Naive thymus-derived CD4-positive, alpha-beta T cell (primary cell): ENCODE measurements at regions of chr20 and their contacts with region 1.

Region 1: GRCh38 chr20:53869466-53870258 is 200.7 kb downstream of the BCAS1 start:
- DNase-seq: peak in 8 of 9 donors; percentile 66 to 82 (median 76)
- ATAC-seq: peak; percentile 90
- H3K4me3 ChIP-seq: no peak overlapping the region
- H3K4me3 Mint-ChIP-seq: peak overlapping the region; percentile 11 to 85 (median 58)
- H3K27ac ChIP-seq: peak overlapping the region; percentile 60
- H3K27ac Mint-ChIP-seq: peak overlapping the region; percentile 79 to 97 (median 94)
- H3K4me1 ChIP-seq: peaks cover 64 to 73% of the 10 kb centered on the region in 2 donors
- H3K4me1 Mint-ChIP-seq: peaks cover 55 to 85% (median 73%) of the 10 kb centered on the region in 7 donors
- H3K27me3 ChIP-seq: no peaks in the 10 kb centered on the region
- H3K27me3 Mint-ChIP-seq: no peaks in the 10 kb centered on the region

Region 2: DNA sequence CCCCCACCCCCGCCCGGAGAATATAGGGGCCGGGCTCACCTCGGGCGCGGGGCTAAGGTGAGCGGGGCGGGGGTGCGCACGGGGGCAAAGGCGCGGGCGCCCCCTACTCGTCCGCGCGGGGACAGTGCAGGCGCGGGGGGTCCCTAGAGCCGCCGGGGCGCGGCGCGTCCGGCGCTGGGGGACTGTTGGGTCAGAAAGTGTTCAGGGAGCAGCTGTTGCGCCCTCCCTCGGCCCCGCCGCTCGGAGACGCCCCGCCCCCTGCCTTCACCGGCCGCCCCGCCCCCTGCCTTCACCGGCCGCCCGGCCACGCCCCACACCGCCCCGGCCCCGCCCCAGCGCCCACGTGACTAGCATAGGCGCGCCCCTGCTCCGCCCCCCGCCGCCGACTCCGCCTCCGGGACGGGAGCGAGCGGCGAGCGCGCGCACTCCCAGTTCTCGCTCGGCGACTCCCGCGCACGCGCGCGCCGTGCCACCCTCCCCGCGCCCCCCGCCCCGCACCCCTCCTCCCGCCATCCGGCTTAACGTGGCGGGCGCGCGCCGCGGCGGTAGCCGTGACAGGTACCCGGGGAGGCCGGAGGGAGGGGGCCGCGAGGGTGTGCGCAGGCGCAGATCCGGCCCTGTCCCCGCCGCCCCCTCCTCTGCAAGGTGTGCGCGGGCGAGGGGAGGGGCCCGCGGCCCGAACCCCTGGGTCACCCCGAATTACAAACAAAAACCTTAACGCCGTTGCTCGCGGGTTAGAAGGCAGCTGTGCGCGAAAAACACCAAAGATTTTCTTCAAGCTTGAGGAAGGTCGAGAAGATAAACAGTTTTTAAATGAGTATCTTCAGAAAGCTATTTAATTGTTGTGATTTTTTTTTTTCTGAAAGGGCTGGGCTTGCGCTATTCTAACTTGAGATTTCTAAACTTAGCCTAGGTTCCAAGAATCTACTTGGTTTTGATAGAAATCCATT is 275.3 kb before region 1 on chr20:
- CTCF ChIA-PET with region 1: interaction called, 3 read pairs
- POLR2A ChIA-PET with region 1: interaction called, 16 read pairs
- intact Hi-C with region 1: loop called in 1 of 2 experiments (anchors 1 kb)
- DNase-seq: peak; percentile 93 to 100 (median 96)
- ATAC-seq: peak; percentile 90
- H3K4me3 ChIP-seq: peak overlapping the region; percentile 81
- H3K4me3 Mint-ChIP-seq: peak overlapping the region; percentile 89 to 99 (median 92)
- H3K27ac ChIP-seq: peak overlapping the region; percentile 97
- H3K27ac Mint-ChIP-seq: peak overlapping the region; percentile 90 to 98 (median 97)
- H3K4me1 ChIP-seq: peaks cover 14 to 21% of the 10 kb centered on the region in 2 donors
- H3K4me1 Mint-ChIP-seq: peaks cover 23 to 66% (median 54%) of the 10 kb centered on the region in 7 donors
- H3K27me3 ChIP-seq: no peaks in the 10 kb centered on the region
- H3K27me3 Mint-ChIP-seq: no peaks in the 10 kb centered on the region

Region 3: DNA sequence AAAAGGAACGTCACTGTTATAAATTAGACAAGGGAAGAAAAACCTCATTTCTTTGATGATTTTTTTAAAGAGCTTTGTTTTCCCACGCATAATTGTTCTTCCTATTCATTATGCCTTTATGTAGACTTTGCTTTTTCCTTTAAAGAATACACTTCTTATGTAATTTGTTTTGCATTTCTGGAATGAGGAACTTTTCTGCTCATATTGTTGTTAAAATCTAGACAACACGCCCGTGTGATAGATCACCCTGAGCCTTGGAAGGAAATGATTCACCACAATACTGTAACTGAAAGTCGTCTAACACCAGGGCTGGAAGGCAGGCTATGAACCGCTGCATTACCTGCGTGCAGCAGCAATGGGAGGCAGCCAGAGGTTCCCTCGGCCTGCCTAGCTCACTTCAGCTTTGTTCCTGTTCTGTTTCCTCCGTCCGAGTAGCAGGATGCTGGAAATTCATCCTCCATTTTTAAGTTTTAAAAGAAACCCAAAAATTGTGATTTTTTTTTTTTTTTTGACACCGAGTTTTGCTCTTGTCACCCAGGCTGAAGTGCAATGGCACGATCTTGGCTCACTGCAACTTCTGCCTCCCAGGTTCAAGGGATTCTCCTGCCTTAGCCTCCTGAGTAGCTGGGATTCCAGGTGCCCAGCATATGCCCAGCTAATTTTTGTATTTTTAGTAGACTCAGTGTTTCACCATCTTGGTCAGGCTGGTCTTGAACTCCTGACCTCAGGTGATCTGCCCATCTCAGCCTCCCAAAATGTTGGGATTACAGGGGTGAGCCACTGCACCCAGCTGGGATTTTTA is 226.4 kb before region 1 on chr20:
- CTCF ChIA-PET with region 1: interaction called, 6 read pairs
- POLR2A ChIA-PET with region 1: interaction called, 5 read pairs
- intact Hi-C with region 1: loop called in 1 of 2 experiments (anchors 1 kb)
- DNase-seq: peak in 8 of 9 donors; percentile 61 to 81 (median 75)
- ATAC-seq: peak; percentile 98
- H3K4me3 ChIP-seq: peak overlapping the region; percentile 56
- H3K4me3 Mint-ChIP-seq: peak overlapping the region; percentile 73 to 92 (median 85)
- H3K27ac ChIP-seq: peak overlapping the region; percentile 77
- H3K27ac Mint-ChIP-seq: peak overlapping the region; percentile 90 to 100 (median 97)
- H3K4me1 ChIP-seq: peaks cover 13 to 45% of the 10 kb centered on the region in 2 donors
- H3K4me1 Mint-ChIP-seq: peaks cover 30 to 64% (median 52%) of the 10 kb centered on the region in 7 donors
- H3K27me3 ChIP-seq: no peaks in the 10 kb centered on the region
- H3K27me3 Mint-ChIP-seq: no peaks in the 10 kb centered on the region

Region 4: DNA sequence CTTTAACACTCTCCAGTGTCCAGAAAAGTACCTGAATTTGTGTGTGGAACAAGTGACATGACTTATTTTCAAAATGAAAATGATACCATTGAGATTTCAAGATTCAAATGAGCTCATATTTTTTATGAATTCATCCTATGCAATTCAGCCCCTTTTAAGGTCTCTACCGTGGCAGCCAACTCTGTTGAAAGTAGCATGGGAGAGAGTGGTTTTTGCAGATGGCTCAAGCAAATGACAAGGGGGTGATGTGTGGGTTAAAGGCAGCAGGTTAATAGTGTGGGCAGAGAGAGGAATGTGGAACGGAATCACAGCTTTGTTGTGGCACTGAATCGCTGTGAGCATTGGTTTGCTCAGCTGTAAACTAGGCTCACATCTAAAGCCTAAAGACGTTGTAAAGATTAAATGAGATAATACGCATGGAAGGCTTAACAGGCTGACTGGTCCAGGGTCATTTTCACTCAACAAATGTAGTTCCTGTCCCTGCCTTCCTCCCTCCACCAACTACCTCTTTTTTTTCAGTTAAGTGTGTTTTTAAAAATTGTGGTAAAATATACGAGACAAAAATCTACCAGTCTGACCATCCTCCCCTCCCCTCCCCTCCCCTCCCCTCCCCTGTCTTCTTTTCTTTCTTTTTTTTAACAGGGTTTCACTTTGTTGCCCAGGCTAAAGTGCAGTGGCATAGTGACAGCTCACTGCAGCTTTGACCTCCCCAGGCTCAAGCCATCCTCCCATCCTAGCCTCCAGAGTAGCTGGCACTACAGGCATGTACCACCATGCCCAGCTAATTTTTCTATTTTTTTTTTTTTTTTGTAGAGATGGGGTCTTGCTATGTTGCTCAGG is 161.3 kb before region 1 on chr20:
- CTCF ChIA-PET with region 1: interaction called, 3 read pairs
- POLR2A ChIA-PET with region 1: interaction called, 10 read pairs
- intact Hi-C with region 1: loop called (anchors 2 kb)
- DNase-seq: peak in 7 of 9 donors; percentile 15 to 52 (median 18)
- ATAC-seq: peak; percentile 62
- H3K4me3 ChIP-seq: no peak overlapping the region
- H3K4me3 Mint-ChIP-seq: peak overlapping the region; percentile 61 to 88 (median 77)
- H3K27ac ChIP-seq: peak overlapping the region; percentile 58
- H3K27ac Mint-ChIP-seq: peak overlapping the region; percentile 91 to 100 (median 96)
- H3K4me1 ChIP-seq: peaks cover 22 to 42% of the 10 kb centered on the region in 2 donors
- H3K4me1 Mint-ChIP-seq: peaks cover 29 to 59% (median 57%) of the 10 kb centered on the region in 7 donors
- H3K27me3 ChIP-seq: no peaks in the 10 kb centered on the region
- H3K27me3 Mint-ChIP-seq: no peaks in the 10 kb centered on the region

Region 5: GRCh38 chr20:53839423-53840176 is 30.1 kb before region 1 on chr20:
- CTCF ChIA-PET with region 1: interaction called, 4 read pairs
- POLR2A ChIA-PET with region 1: interaction called, 12 read pairs
- intact Hi-C with region 1: loop called (anchors 1 kb)
- DNase-seq: peak; percentile 18 to 81 (median 68)
- ATAC-seq: peak; percentile 79
- H3K4me3 ChIP-seq: no peak overlapping the region
- H3K4me3 Mint-ChIP-seq: peak overlapping the region; percentile 48 to 95 (median 82)
- H3K27ac ChIP-seq: peak overlapping the region; percentile 65
- H3K27ac Mint-ChIP-seq: peak overlapping the region; percentile 93 to 100 (median 97)
- H3K4me1 ChIP-seq: peaks cover 64 to 68% of the 10 kb centered on the region in 2 donors
- H3K4me1 Mint-ChIP-seq: peaks cover 44 to 83% (median 71%) of the 10 kb centered on the region in 7 donors
- H3K27me3 ChIP-seq: no peaks in the 10 kb centered on the region
- H3K27me3 Mint-ChIP-seq: no peaks in the 10 kb centered on the region

Region 6: DNA sequence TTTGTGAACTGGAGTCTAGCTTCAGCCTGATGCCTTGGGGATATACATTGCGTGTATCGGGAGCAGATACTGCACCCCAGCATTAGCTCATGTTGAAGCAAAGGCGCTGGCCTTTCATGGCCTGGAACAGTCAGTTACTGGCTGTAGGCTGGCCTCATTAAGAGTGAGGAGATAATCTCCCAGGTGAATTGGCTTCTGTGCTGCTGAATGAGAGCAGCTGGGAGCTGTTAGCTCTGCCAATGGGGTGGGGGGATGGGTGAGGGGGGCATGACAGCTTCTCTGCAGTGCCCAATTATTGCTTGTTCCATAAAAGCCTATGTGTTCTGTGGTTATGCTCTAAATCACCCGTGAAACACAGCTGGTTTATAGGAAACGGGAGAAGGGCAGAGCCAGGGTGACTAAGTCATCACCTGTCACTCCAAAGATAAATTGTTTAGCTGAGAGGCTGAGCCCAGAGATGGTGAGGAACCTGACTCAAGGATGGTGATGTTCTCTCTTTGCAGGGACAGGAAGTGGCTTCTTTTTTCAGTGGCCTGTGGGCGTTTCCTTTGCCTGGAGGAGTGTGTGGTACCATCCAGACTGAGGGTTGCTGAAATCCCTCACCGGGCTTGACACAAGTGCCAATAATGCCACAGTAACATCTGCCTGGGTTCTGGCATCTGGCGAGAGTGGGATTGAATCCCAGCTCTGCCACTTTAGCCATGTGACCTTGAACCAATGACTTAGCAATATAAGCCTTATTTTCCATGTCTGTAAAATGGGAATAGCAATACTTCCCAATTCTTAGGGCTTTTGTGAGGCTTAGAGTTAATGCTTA is 29.9 kb after region 1 on chr20:
- CTCF ChIA-PET with region 1: interaction called, 12 read pairs
- POLR2A ChIA-PET with region 1: interaction called, 23 read pairs
- intact Hi-C with region 1: loop called (anchors 1 kb)
- DNase-seq: peak in 8 of 9 donors; percentile 66 to 78 (median 74)
- ATAC-seq: peak; percentile 91
- H3K4me3 ChIP-seq: no peak overlapping the region
- H3K4me3 Mint-ChIP-seq: peak overlapping the region in 7 of 10 donors; percentile 28 to 72 (median 44)
- H3K27ac ChIP-seq: peak overlapping the region; percentile 2
- H3K27ac Mint-ChIP-seq: peak overlapping the region; percentile 61 to 92 (median 81)
- H3K4me1 ChIP-seq: peaks cover 13 to 18% of the 10 kb centered on the region in 2 donors
- H3K4me1 Mint-ChIP-seq: peaks cover 0 to 51% (median 40%) of the 10 kb centered on the region in 7 donors
- H3K27me3 ChIP-seq: no peaks in the 10 kb centered on the region
- H3K27me3 Mint-ChIP-seq: no peaks in the 10 kb centered on the region

Region 7: DNA sequence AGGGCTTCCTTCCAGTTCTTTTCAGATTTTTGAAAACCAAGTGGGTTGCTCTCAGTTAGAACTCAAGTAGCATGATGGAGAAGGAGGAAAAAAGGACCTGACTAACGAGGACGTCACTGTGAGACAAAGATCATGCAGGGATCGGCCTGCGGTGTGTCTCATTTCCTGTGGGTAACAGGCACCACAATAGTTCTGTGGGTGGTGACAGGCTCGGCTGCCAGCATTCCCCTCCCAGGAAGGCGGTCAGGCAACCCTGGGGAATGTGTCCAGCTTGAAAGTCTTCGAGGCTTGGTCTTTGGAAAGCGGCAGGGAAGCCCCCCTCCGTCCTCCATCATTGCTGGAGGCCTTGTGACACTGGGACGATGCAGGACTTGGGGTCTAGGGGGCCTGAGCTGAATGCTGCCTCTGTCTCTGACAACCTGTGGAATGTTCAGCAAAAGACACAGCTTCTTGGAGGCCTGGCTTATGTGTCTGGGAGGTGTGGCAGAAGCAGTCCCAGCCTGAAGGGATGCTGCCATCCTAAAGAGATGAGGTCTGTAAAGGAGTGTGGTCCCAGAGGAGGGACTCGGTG is 79.7 kb after region 1 on chr20:
- CTCF ChIA-PET with region 1: no interaction called
- POLR2A ChIA-PET with region 1: interaction called, 3 read pairs
- intact Hi-C with region 1: loop called (anchors 2 kb)
- DNase-seq: peak; percentile 45 to 89 (median 86)
- ATAC-seq: peak; percentile 97
- H3K4me3 ChIP-seq: peak overlapping the region; percentile 1
- H3K4me3 Mint-ChIP-seq: peak overlapping the region; percentile 39 to 87 (median 76)
- H3K27ac ChIP-seq: peak overlapping the region; percentile 82
- H3K27ac Mint-ChIP-seq: peak overlapping the region; percentile 76 to 99 (median 97)
- H3K4me1 ChIP-seq: peaks cover 26 to 28% of the 10 kb centered on the region in 2 donors
- H3K4me1 Mint-ChIP-seq: peaks cover 23 to 47% (median 41%) of the 10 kb centered on the region in 7 donors
- H3K27me3 ChIP-seq: no peaks in the 10 kb centered on the region
- H3K27me3 Mint-ChIP-seq: peaks cover 0 to 2% (median 0%) of the 10 kb centered on the region in 5 donors

Region 8: DNA sequence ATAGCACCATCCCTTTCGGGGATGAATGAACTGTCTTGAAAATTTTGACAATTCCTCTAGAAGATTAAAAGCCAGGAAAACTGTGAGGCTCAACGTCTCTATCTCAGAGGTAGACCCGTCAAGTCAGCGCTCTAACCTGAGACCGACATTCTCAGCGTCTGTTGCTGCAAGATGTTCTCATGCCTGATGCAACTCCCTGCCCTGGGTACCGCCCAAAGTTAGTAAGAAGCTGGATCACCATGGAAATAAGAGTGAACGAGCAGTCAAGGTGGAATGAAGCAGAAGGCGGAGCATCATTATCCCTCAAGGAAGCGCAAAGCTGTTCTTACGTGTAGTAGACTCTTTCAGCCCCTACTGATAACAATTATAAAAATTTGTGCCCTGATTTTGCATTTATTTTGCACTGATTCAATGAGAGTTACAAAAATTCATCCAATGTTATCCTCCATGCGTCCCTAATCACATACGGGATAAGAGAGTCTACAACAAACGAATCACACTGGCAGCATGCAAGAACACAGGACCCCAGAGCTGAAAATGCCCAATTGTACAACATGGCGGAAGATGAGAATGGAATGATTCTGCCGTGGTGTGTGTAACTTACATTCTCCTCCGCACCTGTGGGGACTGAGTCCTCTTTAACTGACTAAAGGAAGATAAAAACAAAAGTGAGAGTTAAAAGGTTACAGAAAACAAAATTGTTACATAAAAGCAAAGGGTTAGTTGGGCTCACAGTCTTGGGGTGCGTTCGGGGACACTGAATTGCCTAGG is 105.3 kb after region 1 on chr20:
- CTCF ChIA-PET with region 1: no interaction called
- POLR2A ChIA-PET with region 1: no interaction called
- intact Hi-C with region 1: no loop called
- DNase-seq: no peak
- ATAC-seq: no peak
- H3K4me3 ChIP-seq: no peak overlapping the region
- H3K4me3 Mint-ChIP-seq: no peak overlapping the region
- H3K27ac ChIP-seq: no peak overlapping the region
- H3K27ac Mint-ChIP-seq: no peak overlapping the region
- H3K4me1 ChIP-seq: no peaks in the 10 kb centered on the region
- H3K4me1 Mint-ChIP-seq: no peaks in the 10 kb centered on the region
- H3K27me3 ChIP-seq: no peaks in the 10 kb centered on the region
- H3K27me3 Mint-ChIP-seq: peaks cover 0 to 17% (median 0%) of the 10 kb centered on the region in 5 donors

Region 9: GRCh38 chr20:54004445-54004844 is 134.8 kb after region 1 on chr20:
- CTCF ChIA-PET with region 1: no interaction called
- POLR2A ChIA-PET with region 1: no interaction called
- intact Hi-C with region 1: no loop called
- DNase-seq: no peak
- ATAC-seq: no peak
- H3K4me3 ChIP-seq: no peak overlapping the region
- H3K4me3 Mint-ChIP-seq: no peak overlapping the region
- H3K27ac ChIP-seq: no peak overlapping the region
- H3K27ac Mint-ChIP-seq: no peak overlapping the region
- H3K4me1 ChIP-seq: no peaks in the 10 kb centered on the region
- H3K4me1 Mint-ChIP-seq: peaks cover 0 to 8% (median 0%) of the 10 kb centered on the region in 7 donors
- H3K27me3 ChIP-seq: no peaks in the 10 kb centered on the region
- H3K27me3 Mint-ChIP-seq: peaks cover 14 to 37% (median 23%) of the 10 kb centered on the region in 5 donors

Region 10: GRCh38 chr20:54643791-54644190 is 774.1 kb after region 1 on chr20:
- CTCF ChIA-PET with region 1: no interaction called
- POLR2A ChIA-PET with region 1: no interaction called
- intact Hi-C with region 1: no loop called
- DNase-seq: no peak
- ATAC-seq: no peak
- H3K4me3 ChIP-seq: no peak overlapping the region
- H3K4me3 Mint-ChIP-seq: no peak overlapping the region
- H3K27ac ChIP-seq: no peak overlapping the region
- H3K27ac Mint-ChIP-seq: no peak overlapping the region
- H3K4me1 ChIP-seq: no peaks in the 10 kb centered on the region
- H3K4me1 Mint-ChIP-seq: no peaks in the 10 kb centered on the region
- H3K27me3 ChIP-seq: no peaks in the 10 kb centered on the region
- H3K27me3 Mint-ChIP-seq: peaks cover 0 to 18% (median 5%) of the 10 kb centered on the region in 5 donors

Region 11: DNA sequence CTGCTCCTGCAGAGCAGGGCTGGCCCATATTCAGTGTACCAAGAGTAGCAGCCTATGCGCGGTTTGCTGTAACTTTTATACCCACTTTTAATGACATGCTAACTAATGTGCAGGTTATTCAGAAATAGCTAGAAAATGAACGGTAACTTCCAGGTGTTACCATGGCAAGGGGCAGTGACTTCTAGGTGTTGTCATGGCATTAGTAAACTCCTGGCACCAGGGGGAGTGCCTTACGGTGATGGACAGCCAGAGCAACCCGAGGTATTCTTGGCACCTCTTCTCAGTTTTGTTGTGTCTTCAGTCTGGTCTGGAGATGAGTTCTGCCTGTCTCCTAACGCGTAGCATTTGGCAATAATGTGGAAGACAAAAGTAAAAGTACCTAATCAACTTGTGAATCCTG is 1166.9 kb after region 1 on chr20:
- CTCF ChIA-PET with region 1: no interaction called
- POLR2A ChIA-PET with region 1: no interaction called
- intact Hi-C with region 1: no loop called
- DNase-seq: no peak
- ATAC-seq: no peak
- H3K4me3 ChIP-seq: no peak overlapping the region
- H3K4me3 Mint-ChIP-seq: no peak overlapping the region
- H3K27ac ChIP-seq: no peak overlapping the region
- H3K27ac Mint-ChIP-seq: no peak overlapping the region
- H3K4me1 ChIP-seq: no peaks in the 10 kb centered on the region
- H3K4me1 Mint-ChIP-seq: no peaks in the 10 kb centered on the region
- H3K27me3 ChIP-seq: no peaks in the 10 kb centered on the region
- H3K27me3 Mint-ChIP-seq: no peaks in the 10 kb centered on the region